ENCODE measurements at regions of chr19 and their contacts with region 1.

Region 1: GRCh38 chr19:16771618-16772017 is 52.0 kb downstream of the NWD1 start:
- DNase-seq: peak; percentile 83
- ATAC-seq: peak; percentile 80
- H3K4me3 Mint-ChIP-seq: no peak overlapping the region
- H3K27ac Mint-ChIP-seq: no peak overlapping the region
- H3K4me1 Mint-ChIP-seq: no peaks in the 10 kb centered on the region
- H3K27me3 Mint-ChIP-seq: peaks cover 7% of the 10 kb centered on the region

Region 2: GRCh38 chr19:16795721-16796120 is 24.1 kb after region 1 on chr19:
- CTCF ChIA-PET with region 1: no interaction called
- DNase-seq: no peak
- ATAC-seq: no peak
- H3K4me3 Mint-ChIP-seq: no peak overlapping the region
- H3K27ac Mint-ChIP-seq: no peak overlapping the region
- H3K4me1 Mint-ChIP-seq: no peaks in the 10 kb centered on the region
- H3K27me3 Mint-ChIP-seq: no peaks in the 10 kb centered on the region

Region 3: GRCh38 chr19:16825312-16826052 is 53.9 kb after region 1 on chr19:
- CTCF ChIA-PET with region 1: no interaction called
- DNase-seq: no peak
- ATAC-seq: no peak
- H3K4me3 Mint-ChIP-seq: peak overlapping the region; percentile 53
- H3K27ac Mint-ChIP-seq: no peak overlapping the region
- H3K4me1 Mint-ChIP-seq: peaks cover 21% of the 10 kb centered on the region
- H3K27me3 Mint-ChIP-seq: peaks cover 28% of the 10 kb centered on the region

Region 4: GRCh38 chr19:16849177-16849576 is 77.6 kb after region 1 on chr19:
- CTCF ChIA-PET with region 1: no interaction called
- DNase-seq: no peak
- ATAC-seq: no peak
- H3K4me3 Mint-ChIP-seq: no peak overlapping the region
- H3K27ac Mint-ChIP-seq: no peak overlapping the region
- H3K4me1 Mint-ChIP-seq: no peaks in the 10 kb centered on the region
- H3K27me3 Mint-ChIP-seq: no peaks in the 10 kb centered on the region

Region 5: GRCh38 chr19:17052439-17053210 is 281.0 kb after region 1 on chr19:
- CTCF ChIA-PET with region 1: interaction called, 14 read pairs
- DNase-seq: no peak
- ATAC-seq: no peak
- H3K4me3 Mint-ChIP-seq: no peak overlapping the region
- H3K27ac Mint-ChIP-seq: no peak overlapping the region
- H3K4me1 Mint-ChIP-seq: no peaks in the 10 kb centered on the region
- H3K27me3 Mint-ChIP-seq: no peaks in the 10 kb centered on the region